CD4-positive, alpha-beta memory T cell (primary cell): ENCODE measurements at regions of chr3 and their contacts with region 1.

Region 1: GRCh38 chr3:31242026-31242960 is 290.4 kb upstream of the STT3B start:
- DNase-seq: no peak
- H3K4me3 ChIP-seq: no peak overlapping the region
- H3K4me3 Mint-ChIP-seq: no peak overlapping the region
- H3K27ac ChIP-seq: no peak overlapping the region
- H3K27ac Mint-ChIP-seq: no peak overlapping the region
- H3K4me1 ChIP-seq: no peaks in the 10 kb centered on the region
- H3K4me1 Mint-ChIP-seq: peaks cover 7 to 16% (median 11%) of the 10 kb centered on the region in 4 donors
- H3K27me3 ChIP-seq: no peaks in the 10 kb centered on the region
- H3K27me3 Mint-ChIP-seq: no peaks in the 10 kb centered on the region

Region 2: GRCh38 chr3:31227131-31227562 is 15.1 kb before region 1 on chr3:
- CTCF ChIA-PET with region 1: interaction called, 7 read pairs
- POLR2A ChIA-PET with region 1: interaction called, 12 read pairs
- intact Hi-C with region 1: no loop called
- DNase-seq: peak; percentile 49 to 82 (median 73)
- H3K4me3 ChIP-seq: no peak overlapping the region
- H3K4me3 Mint-ChIP-seq: peak overlapping the region; percentile 38 to 74 (median 64)
- H3K27ac ChIP-seq: peak overlapping the region; percentile 45
- H3K27ac Mint-ChIP-seq: peak overlapping the region; percentile 81 to 96 (median 93)
- H3K4me1 ChIP-seq: peaks cover 99% of the 10 kb centered on the region
- H3K4me1 Mint-ChIP-seq: peaks cover 71 to 96% (median 86%) of the 10 kb centered on the region in 4 donors
- H3K27me3 ChIP-seq: no peaks in the 10 kb centered on the region
- H3K27me3 Mint-ChIP-seq: no peaks in the 10 kb centered on the region